Activated T-helper 1 cell treated with anti-CD3 and anti-CD28 coated beads, Interleukin-12 subunit alpha, Interleukin-12 subunit beta, Interleukin-2, Interleukin-4 antibody, amounts not matched to agents 30 ng/mL and 10 ng/mL and 1 ng/mL, durations not matched to agents 14 hours and 24 hours and 36 hours (primary cell): ENCODE measurements at regions of chr14 and their contacts with region 1.

Region 1: DNA sequence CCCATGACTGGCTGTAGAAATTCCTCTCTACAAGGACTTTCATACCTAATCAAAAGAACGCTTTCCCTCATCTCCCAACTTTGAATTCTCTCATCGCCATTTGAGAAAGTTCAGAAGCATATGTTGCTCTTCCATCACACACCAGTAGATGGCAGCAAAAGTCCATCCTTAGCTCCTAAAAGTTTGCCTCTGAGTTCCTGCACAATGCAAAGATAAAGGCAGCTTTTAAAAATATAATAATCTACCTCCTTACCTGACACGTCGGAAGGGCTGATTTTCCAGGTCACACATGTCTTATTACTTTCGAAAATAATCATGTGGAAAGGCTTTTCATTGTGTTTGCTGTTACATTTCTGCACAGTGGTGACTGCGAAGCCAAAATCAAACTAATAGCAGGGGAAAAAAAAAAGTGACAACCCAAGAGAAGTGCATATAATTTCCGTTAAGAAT is 456.7 kb upstream of the SEL1L start:
- DNase-seq: peak; percentile 20
- H3K4me3 Mint-ChIP-seq: no peak overlapping the region
- H3K27ac Mint-ChIP-seq: no peak overlapping the region
- H3K4me1 Mint-ChIP-seq: no peaks in the 10 kb centered on the region
- H3K27me3 Mint-ChIP-seq: no peaks in the 10 kb centered on the region

Region 2: DNA sequence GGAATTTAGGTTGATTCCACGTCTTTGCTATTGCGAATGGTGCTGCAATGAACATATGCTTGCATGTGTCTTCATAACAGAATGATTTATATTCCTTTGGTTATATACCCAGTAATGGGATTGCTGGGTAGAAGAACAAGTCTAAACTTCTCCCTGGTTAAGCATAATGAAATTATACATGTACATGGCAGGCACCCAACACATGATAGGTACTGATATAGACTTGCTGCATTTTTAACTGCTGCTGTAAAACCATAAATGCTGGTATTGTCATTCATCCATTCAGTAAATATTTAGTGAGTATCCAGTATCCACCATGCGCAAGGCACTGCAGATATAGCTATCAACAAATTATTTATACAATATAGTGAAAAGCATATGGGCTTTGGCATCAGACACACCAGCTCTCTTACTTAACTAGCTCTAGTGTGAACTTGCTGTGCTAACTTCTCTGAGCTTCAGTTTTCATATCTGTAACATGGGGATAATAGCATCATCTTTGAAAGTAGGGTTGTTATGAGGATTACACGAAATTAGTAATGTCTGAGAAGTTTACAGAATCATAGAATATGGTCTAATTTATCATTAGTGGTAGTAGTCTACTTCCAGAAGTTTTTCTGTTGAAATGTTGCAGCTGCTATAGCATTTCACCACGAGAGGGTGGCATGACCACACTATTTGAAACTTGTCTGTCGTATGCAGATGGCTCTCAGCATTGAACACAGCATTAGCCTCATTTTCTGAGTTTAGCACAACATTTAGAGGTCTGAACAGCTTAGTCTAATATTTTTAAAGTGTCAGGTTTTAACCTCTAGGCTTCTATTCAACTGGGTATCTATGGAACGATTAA is 424.7 kb before region 1 on chr14:
- intact Hi-C with region 1: loop called (anchors 5 kb)
- DNase-seq: no peak
- H3K4me3 Mint-ChIP-seq: no peak overlapping the region
- H3K27ac Mint-ChIP-seq: no peak overlapping the region
- H3K4me1 Mint-ChIP-seq: no peaks in the 10 kb centered on the region
- H3K27me3 Mint-ChIP-seq: no peaks in the 10 kb centered on the region

Region 3: GRCh38 chr14:81625343-81625742 is 365.0 kb before region 1 on chr14:
- intact Hi-C with region 1: loop called (anchors 5 kb)
- DNase-seq: no peak
- H3K4me3 Mint-ChIP-seq: no peak overlapping the region
- H3K27ac Mint-ChIP-seq: no peak overlapping the region
- H3K4me1 Mint-ChIP-seq: no peaks in the 10 kb centered on the region
- H3K27me3 Mint-ChIP-seq: no peaks in the 10 kb centered on the region